ENCODE measurements at regions of chr11 and their contacts with region 1.

Region 1: GRCh38 chr11:96389720-96390487 is at the starts of genes CCDC82 and JRKL:
- ATAC-seq: peak; percentile 89 to 95 (median 93)
- H3K4me3 ChIP-seq: peak within 1 kb of the TSS; percentile 59 to 88 (median 76)
- H3K27ac ChIP-seq: peak within 1 kb of the TSS; percentile 86 to 89
- H3K4me1 ChIP-seq: peaks cover 8 to 26% of the 10 kb centered on the region in 2 donors
- total RNA-seq, gene CCDC82: 11.3 to 59.3 (median 36.7) TPM
- total RNA-seq, gene JRKL: 7.0 to 14.7 (median 11.8) TPM

Region 2: GRCh38 chr11:95821640-95822039 is 568.3 kb before region 1 on chr11:
- in situ Hi-C with region 1: loop called in 2 of 9 experiments (anchors 25 kb)
- ATAC-seq: no peak
- H3K4me3 ChIP-seq: no peak overlapping the region
- H3K27ac ChIP-seq: no peak overlapping the region
- H3K4me1 ChIP-seq: no peaks in the 10 kb centered on the region

Region 3: DNA sequence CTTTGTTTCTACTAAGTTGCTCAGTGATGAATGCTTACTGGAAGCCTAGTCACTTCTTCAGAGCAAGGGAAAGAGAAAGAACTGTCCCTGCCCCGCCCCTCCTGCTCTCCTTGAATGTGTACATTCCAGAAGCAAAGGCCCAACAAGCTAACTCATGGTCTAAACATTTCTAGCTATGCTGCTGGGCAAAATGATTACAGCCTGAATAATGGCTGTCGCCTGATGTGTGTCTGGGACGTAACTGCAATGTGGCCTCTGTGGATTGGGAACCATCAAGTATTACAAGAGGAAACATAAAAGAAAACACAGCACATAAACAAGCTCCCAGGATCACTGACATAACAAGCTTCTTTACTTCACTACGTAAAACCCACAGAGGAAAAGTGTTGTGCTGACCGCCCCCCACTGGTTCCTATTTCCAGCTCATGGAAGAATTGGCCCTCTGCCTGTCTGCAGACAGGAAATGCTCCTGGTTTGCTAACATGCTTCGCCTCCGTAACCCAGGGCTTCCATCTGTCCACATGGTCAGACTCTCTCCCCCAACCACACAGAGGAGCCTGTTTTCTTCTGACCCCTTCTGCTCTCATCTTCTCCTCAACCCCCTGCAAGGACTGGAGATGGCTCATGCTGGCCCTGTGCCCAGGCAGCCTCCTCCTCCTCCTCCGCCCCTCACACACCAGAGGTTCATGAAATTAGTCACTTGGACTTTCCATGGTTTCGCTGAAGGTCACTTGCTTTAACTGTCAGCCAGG is 234.1 kb before region 1 on chr11:
- in situ Hi-C with region 1: no loop called
- ATAC-seq: peak; percentile 66 to 83 (median 75)
- H3K4me3 ChIP-seq: no peak overlapping the region
- H3K27ac ChIP-seq: peak overlapping the region in 1 of 2 donors; percentile 22
- H3K4me1 ChIP-seq: peaks cover 32 to 42% of the 10 kb centered on the region in 2 donors